ENCODE measurements at regions of chr5 and their contacts with region 1.

Region 1: DNA sequence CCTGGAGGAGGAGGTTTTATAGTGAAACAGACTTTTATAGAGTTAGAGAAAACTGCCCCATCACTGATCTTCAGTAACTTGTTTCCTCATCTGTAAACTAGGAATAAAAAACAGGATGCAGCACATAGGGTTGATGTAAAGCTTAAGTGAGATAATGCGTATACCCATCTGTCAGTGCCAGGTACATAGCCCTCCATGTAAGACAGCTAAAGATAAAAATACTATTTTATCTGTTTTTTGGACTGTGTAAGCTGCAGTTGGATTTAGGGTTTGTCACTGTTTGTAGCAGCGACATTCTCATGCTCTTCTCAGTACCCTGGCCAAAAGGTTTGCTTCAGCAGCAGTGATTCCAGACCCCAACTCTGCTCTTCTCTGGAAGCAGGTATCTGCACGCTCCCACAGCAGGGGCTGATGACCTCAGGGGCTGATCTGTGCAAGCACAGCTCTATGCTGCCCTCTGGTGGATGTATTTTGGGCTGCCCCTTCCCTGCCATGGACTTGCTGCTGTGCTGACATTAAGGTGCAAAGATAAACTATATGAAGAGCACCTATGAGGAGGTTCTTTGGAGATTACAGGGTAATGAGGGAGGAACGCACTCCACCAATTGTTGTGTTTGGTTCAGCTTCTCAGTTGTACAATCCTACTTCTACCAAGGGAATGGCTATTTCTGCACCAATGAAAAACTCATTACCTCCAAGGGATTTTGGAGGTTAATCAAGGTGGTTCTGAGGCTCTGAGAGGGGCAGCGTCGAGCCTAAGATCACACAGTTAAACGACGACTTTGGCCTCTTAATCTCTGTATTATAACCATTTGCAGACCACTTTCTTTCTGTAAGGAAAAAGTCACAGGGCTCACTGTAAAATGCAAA is 13.1 kb downstream of the HMHB1 start:
- H3K4me3 ChIP-seq: no peak overlapping the region
- H3K27ac ChIP-seq: no peak overlapping the region
- H3K4me1 ChIP-seq: peaks cover 11% of the 10 kb centered on the region
- CTCF ChIP-seq: peak; percentile 83

Region 2: DNA sequence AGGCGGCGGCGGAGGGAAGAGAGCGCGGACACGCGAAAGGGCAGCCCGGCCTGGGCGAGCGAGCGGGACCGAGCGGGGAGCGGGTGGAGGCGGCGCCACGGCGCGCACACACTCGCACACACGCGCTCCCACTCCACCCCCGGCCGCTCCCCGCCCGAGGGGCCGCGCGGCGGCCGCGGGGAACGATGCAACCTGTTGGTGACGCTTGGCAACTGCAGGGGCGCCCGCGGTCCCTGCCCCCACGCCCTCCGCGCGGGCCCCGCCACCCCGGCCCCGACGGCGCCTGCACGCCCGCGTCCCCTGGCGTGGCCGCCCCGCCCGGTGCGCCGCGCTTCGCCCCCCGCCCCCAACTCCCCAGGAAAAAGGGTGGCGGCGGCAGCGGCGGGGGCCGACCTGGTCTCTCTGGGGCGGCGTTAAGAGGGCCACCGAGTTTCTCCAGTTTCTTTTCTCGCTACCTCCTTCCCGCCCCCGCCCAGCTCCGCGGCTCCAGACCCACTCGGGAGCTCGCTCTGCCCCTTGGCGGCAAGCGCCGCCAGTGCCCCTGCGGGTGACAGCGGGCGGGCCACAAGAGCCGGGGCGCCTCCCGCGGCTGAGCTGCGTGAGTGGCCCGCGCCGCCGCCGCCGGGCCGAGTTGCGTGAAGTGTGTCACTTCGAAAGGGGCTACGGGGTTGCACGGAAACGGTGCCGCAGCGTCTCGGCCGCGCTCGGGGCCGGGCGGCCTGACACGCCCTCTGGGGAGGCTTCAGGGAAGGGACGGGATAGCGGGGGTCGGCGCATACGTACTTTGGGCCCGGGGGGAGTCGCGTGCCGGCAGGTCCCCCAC is 421.3 kb before region 1 on chr5 and contains the start of gene NR3C1:
- CTCF ChIA-PET with region 1: interaction called, 5 read pairs
- POLR2A ChIA-PET with region 1: interaction called, 15 read pairs
- H3K4me3 ChIP-seq: peak within 1 kb of the TSS; percentile 95
- H3K27ac ChIP-seq: peak within 1 kb of the TSS; percentile 99
- H3K4me1 ChIP-seq: 0 out of 2 replicates have a peak, but pooled peaks cover 5% of the 10 kb centered on the region
- CTCF ChIP-seq: peak; percentile 93

Region 3: DNA sequence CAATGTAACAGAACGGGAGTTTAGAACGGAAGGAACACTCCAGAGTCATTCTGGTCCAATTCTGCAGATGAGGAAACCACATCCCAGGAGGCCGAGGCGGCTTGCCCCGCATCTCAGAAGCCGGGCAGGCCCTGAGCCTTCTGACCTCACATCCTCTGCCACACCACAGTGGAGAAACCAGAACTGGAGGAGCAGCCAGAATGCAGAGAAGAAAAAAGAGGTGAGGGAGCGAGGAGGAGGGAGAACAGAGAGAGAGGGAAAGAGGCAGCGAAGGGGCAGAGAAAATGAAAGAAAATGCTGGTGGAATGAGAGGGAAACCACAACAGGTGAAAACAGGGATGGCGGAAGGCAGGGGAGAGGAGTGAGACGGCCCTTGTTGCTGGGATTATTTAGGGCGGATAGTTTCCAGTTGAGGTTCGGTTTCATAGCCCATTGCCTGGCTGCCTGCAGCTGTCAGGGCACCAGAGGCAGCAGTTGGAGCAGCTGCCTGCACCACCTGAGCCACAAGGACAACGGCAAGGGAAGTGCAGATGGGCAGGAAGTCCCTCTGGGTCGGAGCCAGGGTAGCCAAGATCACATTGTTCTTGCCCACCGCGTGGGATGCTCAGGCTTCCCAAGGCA is 12.9 kb before region 1 on chr5 and contains the start of gene HMHB1:
- CTCF ChIA-PET with region 1: no interaction called
- POLR2A ChIA-PET with region 1: no interaction called
- H3K4me3 ChIP-seq: no peak within 1 kb of the TSS
- H3K27ac ChIP-seq: no peak within 1 kb of the TSS
- H3K4me1 ChIP-seq: no peaks in the 10 kb centered on the region
- CTCF ChIP-seq: no peak